ENCODE measurements at regions of chr18 and their contacts with region 1.

Region 1: GRCh38 chr18:8685141-8685913 is 20.0 kb upstream of the MTCL1 start:
- DNase-seq: no peak
- ATAC-seq: peak; percentile 25; the same call in 1 of the 3 replicates
- H3K4me3 ChIP-seq: no peak overlapping the region
- H3K27ac ChIP-seq: no peak overlapping the region
- H3K4me1 ChIP-seq: peaks cover 0 to 3% of the 10 kb centered on the region in 2 experiments; a peak in 3 of 5 replicates
- H3K27me3 ChIP-seq: peaks cover 6 to 14% of the 10 kb centered on the region in 2 experiments; a peak in 4 of 5 replicates
- CTCF ChIP-seq: no peak
- EP300 ChIP-seq: no peak
- POLR2A ChIP-seq: no peak
- RAD21 ChIP-seq: no peak

Region 2: DNA sequence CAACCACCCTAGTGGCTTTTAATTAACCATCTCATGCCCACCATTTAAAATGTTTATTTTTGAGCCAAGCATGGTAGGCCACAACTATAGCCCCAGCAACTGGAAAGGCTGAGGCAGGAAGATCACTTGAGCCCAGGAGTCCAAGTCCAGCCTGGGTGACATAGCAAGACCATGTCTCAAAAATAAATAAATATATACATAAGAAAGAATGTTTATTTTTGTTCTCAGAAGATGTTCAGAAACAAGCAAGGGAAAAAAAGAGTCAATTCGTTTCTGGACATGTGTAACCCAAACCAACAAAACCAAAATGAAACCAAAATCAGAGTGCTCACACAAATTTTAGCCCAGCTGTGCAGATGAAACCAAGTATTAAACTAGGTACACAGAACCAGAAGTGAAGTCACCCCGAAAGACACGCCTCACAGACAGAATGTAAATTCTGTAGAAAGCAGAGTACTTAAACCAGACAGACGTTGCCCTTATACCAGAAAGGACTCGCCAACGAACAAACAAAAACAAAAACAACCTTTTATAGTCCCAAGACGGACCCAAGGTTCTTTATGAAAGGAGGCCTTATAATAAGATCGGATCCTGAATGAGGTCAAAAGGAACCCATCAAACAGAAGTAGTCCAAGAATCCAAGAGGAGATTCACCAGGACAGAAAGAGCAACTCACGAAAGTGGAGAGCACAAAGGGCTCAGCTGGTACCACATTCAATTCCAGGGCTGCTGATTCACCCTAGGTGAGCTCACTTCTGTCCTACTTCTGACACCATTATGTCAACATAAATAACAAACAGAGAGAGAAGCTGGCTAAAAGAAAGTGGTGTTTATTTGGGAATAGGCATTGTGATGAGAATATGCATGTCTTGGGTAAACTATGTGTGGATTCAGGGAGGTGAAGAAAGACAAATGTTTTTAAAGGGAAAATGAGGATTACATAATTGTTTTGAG is 11.8 kb before region 1 on chr18:
- CTCF ChIA-PET with region 1: interaction called, 4 read pairs
- POLR2A ChIA-PET with region 1: interaction called, 13 read pairs
- in situ Hi-C with region 1: no loop called
- intact Hi-C with region 1: no loop called
- DNase-seq: no peak
- ATAC-seq: no peak; the same call in 2 of the 3 replicates
- H3K4me3 ChIP-seq: no peak overlapping the region
- H3K27ac ChIP-seq: no peak overlapping the region
- H3K4me1 ChIP-seq: no peaks in the 10 kb centered on the region
- H3K27me3 ChIP-seq: no peaks in the 10 kb centered on the region; a peak in 1 of 5 replicates
- CTCF ChIP-seq: no peak
- EP300 ChIP-seq: no peak
- POLR2A ChIP-seq: no peak
- RAD21 ChIP-seq: no peak

Region 3: DNA sequence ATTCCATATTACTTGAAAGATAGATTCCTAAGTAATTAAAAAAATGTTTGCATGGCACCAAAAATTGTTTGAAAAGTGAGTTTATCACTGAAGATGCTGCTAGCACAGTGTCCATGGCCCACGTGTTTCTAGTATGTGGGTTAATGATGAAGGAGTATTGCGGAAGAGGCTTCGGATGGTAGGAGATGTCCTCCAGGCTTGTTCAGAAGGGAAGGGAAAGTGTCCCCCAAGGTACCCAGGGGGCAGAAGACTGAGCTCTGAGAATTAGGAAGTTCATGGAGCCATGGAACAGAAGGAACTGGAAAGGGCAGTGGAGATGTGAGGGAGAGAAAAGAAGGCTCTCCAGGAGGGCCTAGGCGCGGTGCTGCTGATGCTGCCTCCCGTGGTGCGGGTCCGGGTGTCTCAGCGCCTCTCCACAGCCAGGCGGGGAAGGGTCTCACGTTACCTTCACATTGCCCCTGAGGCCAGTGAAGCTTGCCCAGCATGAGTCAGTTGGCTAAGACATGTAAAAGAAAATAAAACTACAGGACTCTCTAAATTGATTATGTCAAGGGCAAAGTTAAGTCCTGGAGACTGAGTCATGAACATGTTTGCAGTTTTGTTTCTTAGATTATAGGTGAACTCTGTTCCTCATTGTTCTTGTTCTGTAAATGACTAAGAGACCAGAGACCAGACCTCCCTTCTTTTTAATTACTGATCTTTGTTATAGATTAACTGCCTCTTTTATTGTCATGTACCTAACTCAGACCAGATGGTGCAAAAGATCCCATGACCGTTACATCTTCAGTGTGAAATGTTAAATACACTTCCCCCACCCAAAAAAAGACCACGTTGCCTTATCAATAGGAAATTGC is 109.0 kb after region 1 on chr18:
- CTCF ChIA-PET with region 1: no interaction called
- POLR2A ChIA-PET with region 1: interaction called, 3 read pairs
- in situ Hi-C with region 1: no loop called
- intact Hi-C with region 1: loop called (anchors 10 kb)
- DNase-seq: no peak
- ATAC-seq: no peak
- H3K4me3 ChIP-seq: no peak overlapping the region
- H3K27ac ChIP-seq: no peak overlapping the region
- H3K4me1 ChIP-seq: peaks cover 8 to 11% of the 10 kb centered on the region in 2 experiments; a peak in 4 of 5 replicates
- H3K27me3 ChIP-seq: peaks cover 22 to 50% of the 10 kb centered on the region in 2 experiments
- CTCF ChIP-seq: no peak
- EP300 ChIP-seq: no peak
- POLR2A ChIP-seq: no peak
- RAD21 ChIP-seq: no peak

Region 4: GRCh38 chr18:8844721-8845148 is 159.4 kb after region 1 on chr18:
- CTCF ChIA-PET with region 1: no interaction called
- POLR2A ChIA-PET with region 1: no interaction called
- in situ Hi-C with region 1: no loop called
- intact Hi-C with region 1: no loop called
- DNase-seq: no peak
- ATAC-seq: no peak
- H3K4me3 ChIP-seq: no peak overlapping the region
- H3K27ac ChIP-seq: no peak overlapping the region
- H3K4me1 ChIP-seq: no peaks in the 10 kb centered on the region
- H3K27me3 ChIP-seq: peaks cover 37 to 60% of the 10 kb centered on the region in 2 experiments
- CTCF ChIP-seq: no peak
- EP300 ChIP-seq: no peak
- POLR2A ChIP-seq: no peak
- RAD21 ChIP-seq: no peak

Measured in K562 (cell line).